GM12878 (cell line): ENCODE measurements at regions of chr9 and their contacts with region 1.

Region 1: GRCh38 chr9:113221003-113221799 is at the starts of genes FKBP15 and SLC31A1:
- DNase-seq: peak; percentile 94
- ATAC-seq: peak; percentile 90
- H3K4me3 ChIP-seq: peak within 1 kb of the TSS; percentile 94
- H3K27ac ChIP-seq: peak within 1 kb of the TSS; percentile 95
- H3K4me1 ChIP-seq: peaks cover 4% of the 10 kb centered on the region; the same call in 1 of the 2 replicates
- H3K27me3 ChIP-seq: no peaks in the 10 kb centered on the region
- CTCF ChIP-seq: no peak
- EP300 ChIP-seq: peak in 1 of 2 experiments; percentile 29; a peak in 1 of 4 replicates
- POLR2A ChIP-seq: peak; percentile 80
- RAD21 ChIP-seq: no peak
- polyA plus RNA-seq, gene FKBP15: 5.0 to 8.2 TPM
- polyA plus RNA-seq, gene SLC31A1: 7.3 to 10.0 TPM

Region 2: GRCh38 chr9:113238859-113239232 is 17.6 kb after region 1 on chr9:
- CTCF ChIA-PET with region 1: no interaction called
- POLR2A ChIA-PET with region 1: interaction called, 3 read pairs
- RAD21 ChIA-PET with region 1: interaction called, 3 read pairs
- SMC1A ChIA-PET with region 1: interaction called, 14 read pairs
- in situ Hi-C with region 1: no loop called
- intact Hi-C with region 1: no loop called
- DNase-seq: no peak
- ATAC-seq: no peak
- H3K4me3 ChIP-seq: no peak overlapping the region
- H3K27ac ChIP-seq: no peak overlapping the region
- H3K4me1 ChIP-seq: no peaks in the 10 kb centered on the region
- H3K27me3 ChIP-seq: no peaks in the 10 kb centered on the region
- CTCF ChIP-seq: no peak
- EP300 ChIP-seq: no peak
- POLR2A ChIP-seq: no peak
- RAD21 ChIP-seq: no peak

Region 3: GRCh38 chr9:113376634-113377567 is 155.7 kb after region 1 on chr9 and contains the start of gene HDHD3:
- CTCF ChIA-PET with region 1: no interaction called
- POLR2A ChIA-PET with region 1: no interaction called
- RAD21 ChIA-PET with region 1: no interaction called
- SMC1A ChIA-PET with region 1: interaction called, 3 read pairs
- in situ Hi-C with region 1: no loop called
- intact Hi-C with region 1: loop called (anchors 5 kb)
- DNase-seq: peak; percentile 40
- ATAC-seq: peak; percentile 93
- H3K4me3 ChIP-seq: peak within 1 kb of the TSS; percentile 77
- H3K27ac ChIP-seq: peak within 1 kb of the TSS; percentile 74; the same call in 1 of the 2 replicates
- H3K4me1 ChIP-seq: peaks cover 26% of the 10 kb centered on the region
- H3K27me3 ChIP-seq: no peaks in the 10 kb centered on the region
- CTCF ChIP-seq: no peak
- EP300 ChIP-seq: no peak
- POLR2A ChIP-seq: peak; percentile 87
- RAD21 ChIP-seq: no peak
- polyA plus RNA-seq, gene HDHD3: 1.3 to 6.5 TPM